ENCODE measurements at regions of chr2 and their contacts with region 1.

Region 1: GRCh38 chr2:177392373-177393202 is at the start of gene AGPS:
- DNase-seq: peak; percentile 91
- ATAC-seq: peak; percentile 97
- H3K4me3 Mint-ChIP-seq: peak within 1 kb of the TSS; percentile 89
- H3K27ac Mint-ChIP-seq: peak within 1 kb of the TSS; percentile 92
- H3K4me1 Mint-ChIP-seq: peaks cover 57% of the 10 kb centered on the region
- H3K27me3 Mint-ChIP-seq: no peaks in the 10 kb centered on the region
- total RNA-seq, gene AGPS: 58.7 to 67.3 TPM

Region 2: GRCh38 chr2:177212106-177212890 is 180.3 kb before region 1 on chr2 and contains the start of gene HNRNPA3:
- CTCF ChIA-PET with region 1: interaction called, 3 read pairs
- POLR2A ChIA-PET with region 1: no interaction called
- intact Hi-C with region 1: loop called (anchors 1 to 5 kb)
- DNase-seq: peak; percentile 100
- ATAC-seq: peak; percentile 90
- H3K4me3 Mint-ChIP-seq: peak within 1 kb of the TSS; percentile 86
- H3K27ac Mint-ChIP-seq: peak within 1 kb of the TSS; percentile 99
- H3K4me1 Mint-ChIP-seq: peaks cover 42% of the 10 kb centered on the region
- H3K27me3 Mint-ChIP-seq: no peaks in the 10 kb centered on the region
- total RNA-seq, gene HNRNPA3: 200 to 290 TPM

Region 3: GRCh38 chr2:177405029-177405692 is 12.6 kb after region 1 on chr2:
- CTCF ChIA-PET with region 1: interaction called, 21 read pairs
- POLR2A ChIA-PET with region 1: interaction called, 3 read pairs
- intact Hi-C with region 1: no loop called
- DNase-seq: no peak
- ATAC-seq: no peak
- H3K4me3 Mint-ChIP-seq: no peak overlapping the region
- H3K27ac Mint-ChIP-seq: no peak overlapping the region
- H3K4me1 Mint-ChIP-seq: peaks cover 44% of the 10 kb centered on the region
- H3K27me3 Mint-ChIP-seq: no peaks in the 10 kb centered on the region

Region 4: DNA sequence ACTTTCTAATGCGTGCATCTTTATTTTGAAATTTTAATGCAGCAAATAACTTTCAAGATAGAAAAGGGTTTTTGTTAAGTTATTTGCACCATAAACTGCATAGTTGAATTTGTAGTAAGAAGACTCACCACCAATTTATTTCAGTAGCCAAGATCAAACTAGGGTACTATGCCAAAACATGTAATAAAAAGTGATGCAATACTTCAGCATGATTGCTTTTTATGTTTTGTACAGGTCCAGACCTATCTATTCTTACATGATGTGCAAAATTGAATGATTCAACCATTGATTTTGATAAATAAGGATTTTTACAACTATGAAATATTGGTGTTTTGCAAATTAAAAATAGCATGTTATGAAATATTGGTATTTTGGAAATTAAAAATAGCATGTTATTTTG is 26.7 kb after region 1 on chr2:
- CTCF ChIA-PET with region 1: interaction called, 20 read pairs
- POLR2A ChIA-PET with region 1: interaction called, 3 read pairs
- intact Hi-C with region 1: no loop called
- DNase-seq: no peak
- ATAC-seq: no peak
- H3K4me3 Mint-ChIP-seq: no peak overlapping the region
- H3K27ac Mint-ChIP-seq: peak overlapping the region; percentile 80
- H3K4me1 Mint-ChIP-seq: peaks cover 34% of the 10 kb centered on the region
- H3K27me3 Mint-ChIP-seq: no peaks in the 10 kb centered on the region

Region 5: GRCh38 chr2:177429688-177430325 is 37.2 kb after region 1 on chr2:
- CTCF ChIA-PET with region 1: no interaction called
- POLR2A ChIA-PET with region 1: no interaction called
- intact Hi-C with region 1: no loop called
- DNase-seq: no peak
- ATAC-seq: no peak
- H3K4me3 Mint-ChIP-seq: no peak overlapping the region
- H3K27ac Mint-ChIP-seq: no peak overlapping the region
- H3K4me1 Mint-ChIP-seq: peaks cover 8% of the 10 kb centered on the region
- H3K27me3 Mint-ChIP-seq: no peaks in the 10 kb centered on the region

Region 6: DNA sequence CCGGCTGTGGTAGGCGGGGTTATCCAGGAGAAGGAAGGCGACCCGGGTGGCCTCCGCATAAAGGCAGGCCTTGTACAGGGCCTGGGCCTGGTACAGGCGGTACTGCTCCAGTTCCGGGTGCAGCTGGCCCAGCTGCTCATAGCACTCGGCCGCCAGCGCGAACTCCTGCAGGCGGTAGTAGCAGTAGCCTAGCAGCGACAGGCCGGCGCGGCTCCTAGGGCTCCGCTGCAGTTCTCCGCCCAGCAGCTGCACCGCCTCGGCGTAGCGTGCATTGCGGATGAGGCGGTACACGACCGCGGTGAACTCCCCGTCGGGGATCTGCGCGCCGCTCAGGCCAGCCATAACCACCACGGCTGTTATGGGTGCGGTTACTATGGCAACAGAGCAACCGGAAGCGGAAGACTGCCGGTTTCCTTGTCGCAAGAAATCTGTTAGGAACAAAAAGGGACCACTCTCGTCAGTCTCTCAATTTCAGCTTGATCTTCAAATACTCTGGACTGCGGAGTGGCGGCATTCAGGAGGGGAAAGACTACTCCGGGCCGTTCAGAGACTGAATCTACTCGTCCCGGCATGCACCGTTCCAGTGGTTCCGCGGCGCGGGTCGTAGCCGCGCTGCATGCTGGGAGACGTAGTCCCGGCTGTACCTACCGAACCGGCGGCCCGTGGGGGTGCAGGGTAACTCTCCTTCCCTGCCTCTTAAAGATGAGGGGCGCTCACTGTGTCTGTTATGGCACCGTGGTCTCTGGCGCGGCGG is 160.0 kb after region 1 on chr2:
- CTCF ChIA-PET with region 1: no interaction called
- POLR2A ChIA-PET with region 1: no interaction called
- intact Hi-C with region 1: loop called (anchors 1 to 2 kb)
- DNase-seq: peak; percentile 92
- ATAC-seq: peak; percentile 96
- H3K4me3 Mint-ChIP-seq: peak overlapping the region; percentile 90
- H3K27ac Mint-ChIP-seq: peak overlapping the region; percentile 99
- H3K4me1 Mint-ChIP-seq: peaks cover 6% of the 10 kb centered on the region
- H3K27me3 Mint-ChIP-seq: no peaks in the 10 kb centered on the region

Region 7: GRCh38 chr2:177618255-177619253 is 226.0 kb after region 1 on chr2:
- CTCF ChIA-PET with region 1: no interaction called
- POLR2A ChIA-PET with region 1: no interaction called
- intact Hi-C with region 1: loop called (anchors 1 kb)
- DNase-seq: peak; percentile 95
- ATAC-seq: peak; percentile 95
- H3K4me3 Mint-ChIP-seq: peak overlapping the region; percentile 90
- H3K27ac Mint-ChIP-seq: peak overlapping the region; percentile 98
- H3K4me1 Mint-ChIP-seq: no peaks in the 10 kb centered on the region
- H3K27me3 Mint-ChIP-seq: no peaks in the 10 kb centered on the region

Measured in activated CD4-positive, alpha-beta T cell treated with anti-CD3 and anti-CD28 coated beads for 36 hours (primary cell).